ENCODE measurements at regions of chr3 and their contacts with region 1.

Region 1: DNA sequence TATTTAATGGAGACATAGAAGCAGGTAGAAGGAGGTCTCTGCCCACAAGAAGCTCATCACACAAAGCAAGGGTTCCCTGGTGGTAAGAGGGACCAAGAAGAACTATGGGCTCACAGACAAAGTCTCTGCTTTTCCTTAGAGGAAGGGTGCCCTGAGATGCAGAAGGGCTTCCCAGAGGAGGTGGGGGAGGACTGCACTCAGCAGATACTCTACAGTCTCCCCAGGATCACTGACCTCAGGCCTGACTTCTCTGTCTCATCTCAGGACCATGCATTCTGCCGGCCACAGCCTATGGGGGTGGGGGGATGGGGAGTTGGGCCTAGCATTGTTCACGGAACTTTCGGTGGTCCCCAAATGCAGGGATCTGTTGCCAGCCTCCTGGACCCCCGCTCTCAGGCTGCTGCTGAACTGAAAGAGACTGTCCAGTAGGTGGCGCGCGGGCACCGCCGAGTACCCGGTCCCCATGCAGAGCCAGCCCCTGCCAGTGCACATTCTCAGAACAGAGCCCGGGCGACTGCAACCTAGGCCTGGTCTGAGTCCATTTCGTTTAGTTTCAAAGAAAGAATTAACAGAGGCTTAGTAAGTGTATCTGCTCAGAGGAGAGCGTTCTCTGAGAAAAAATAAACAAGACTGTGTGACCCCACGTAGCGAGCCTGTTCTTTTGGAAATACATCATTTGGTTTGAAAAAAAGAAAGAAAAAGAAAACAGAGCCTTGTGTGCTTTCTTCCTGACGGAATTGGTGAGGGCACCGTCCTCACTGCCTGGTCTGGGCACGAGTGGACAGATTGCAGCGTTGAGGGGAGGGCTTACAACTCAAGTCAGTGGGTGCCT is 74.1 kb downstream of the LRTM1 start:
- DNase-seq: peak; percentile 72 to 79
- ATAC-seq: peak; percentile 78 to 92 (median 90)
- H3K4me3 ChIP-seq: no peak overlapping the region
- H3K27ac ChIP-seq: no peak overlapping the region
- H3K4me1 ChIP-seq: peaks cover 0 to 4% (median 0%) of the 10 kb centered on the region in 9 donors
- H3K27me3 ChIP-seq: no peaks in the 10 kb centered on the region
- CTCF ChIP-seq: peak; percentile 67 to 89 (median 87)

Region 2: GRCh38 chr3:54756330-54756731 is 97.5 kb before region 1 on chr3:
- intact Hi-C with region 1: no loop called
- DNase-seq: no peak
- ATAC-seq: no peak
- H3K4me3 ChIP-seq: no peak overlapping the region
- H3K27ac ChIP-seq: no peak overlapping the region
- H3K4me1 ChIP-seq: no peaks in the 10 kb centered on the region
- H3K27me3 ChIP-seq: no peaks in the 10 kb centered on the region
- CTCF ChIP-seq: no peak

Region 3: GRCh38 chr3:54875596-54876268 is 21.9 kb after region 1 on chr3:
- intact Hi-C with region 1: loop called in 1 of 10 experiments (anchors 1 kb)
- DNase-seq: no peak
- ATAC-seq: no peak
- H3K4me3 ChIP-seq: no peak overlapping the region
- H3K27ac ChIP-seq: no peak overlapping the region
- H3K4me1 ChIP-seq: no peaks in the 10 kb centered on the region
- H3K27me3 ChIP-seq: peaks cover 0 to 9% (median 0%) of the 10 kb centered on the region in 7 donors
- CTCF ChIP-seq: no peak

Region 4: GRCh38 chr3:55144015-55144673 is 290.4 kb after region 1 on chr3:
- intact Hi-C with region 1: no loop called
- DNase-seq: no peak
- ATAC-seq: no peak
- H3K4me3 ChIP-seq: no peak overlapping the region
- H3K27ac ChIP-seq: no peak overlapping the region
- H3K4me1 ChIP-seq: peaks cover 0 to 7% (median 0%) of the 10 kb centered on the region in 9 donors
- H3K27me3 ChIP-seq: peaks cover 0 to 29% (median 0%) of the 10 kb centered on the region in 7 donors
- CTCF ChIP-seq: no peak

Region 5: DNA sequence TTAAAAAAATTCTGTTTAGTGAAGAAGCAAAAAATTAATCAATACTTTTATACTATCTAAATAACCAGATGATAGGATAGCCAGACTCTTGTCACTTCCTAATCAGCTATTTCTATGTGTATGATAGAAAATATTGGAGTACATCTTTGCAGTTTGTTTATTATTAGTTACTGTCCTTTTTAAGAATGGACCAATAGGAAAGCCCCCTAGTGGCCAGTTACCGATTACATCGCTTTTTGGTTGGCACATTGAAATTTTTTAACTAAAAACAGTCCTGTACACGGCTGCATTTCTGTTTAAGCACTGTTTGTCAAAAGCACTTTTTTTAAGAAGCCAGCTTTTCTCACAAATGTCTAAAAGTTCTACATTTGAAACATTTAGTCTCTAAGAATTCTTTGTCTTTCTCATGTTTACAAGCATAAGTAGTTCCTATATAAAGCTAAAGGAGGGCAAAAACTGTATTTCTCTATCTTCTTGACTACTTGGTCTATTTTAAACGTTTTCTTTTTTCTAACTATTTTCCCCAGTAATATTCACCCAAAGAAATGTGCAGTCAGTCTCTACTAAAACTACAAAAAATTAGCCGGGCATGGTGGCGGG is 327.2 kb after region 1 on chr3:
- intact Hi-C with region 1: loop called in 7 of 10 experiments (anchors 2 to 10 kb)
- DNase-seq: peak in 1 of 2 donors; percentile 36
- ATAC-seq: no peak
- H3K4me3 ChIP-seq: no peak overlapping the region
- H3K27ac ChIP-seq: no peak overlapping the region
- H3K4me1 ChIP-seq: no peaks in the 10 kb centered on the region
- H3K27me3 ChIP-seq: peaks cover 0 to 18% (median 11%) of the 10 kb centered on the region in 7 donors
- CTCF ChIP-seq: peak; percentile 57 to 83 (median 70)

Region 6: GRCh38 chr3:56042326-56042951 is 1188.7 kb after region 1 on chr3:
- intact Hi-C with region 1: loop called in 1 of 10 experiments (anchors 5 kb)
- DNase-seq: no peak
- ATAC-seq: peak in 6 of 8 donors; percentile 57 to 82 (median 64)
- H3K4me3 ChIP-seq: no peak overlapping the region
- H3K27ac ChIP-seq: no peak overlapping the region
- H3K4me1 ChIP-seq: no peaks in the 10 kb centered on the region
- H3K27me3 ChIP-seq: peaks cover 0 to 45% (median 11%) of the 10 kb centered on the region in 7 donors
- CTCF ChIP-seq: peak in 8 of 9 donors; percentile 33 to 66 (median 54)

Region 7: GRCh38 chr3:56251343-56251945 is 1397.7 kb after region 1 on chr3:
- intact Hi-C with region 1: loop called in 5 of 10 experiments (anchors 5 to 10 kb)
- DNase-seq: peak in 1 of 2 donors; percentile 32
- ATAC-seq: peak in 1 of 8 donors; percentile 39
- H3K4me3 ChIP-seq: no peak overlapping the region
- H3K27ac ChIP-seq: no peak overlapping the region
- H3K4me1 ChIP-seq: no peaks in the 10 kb centered on the region
- H3K27me3 ChIP-seq: peaks cover 0 to 4% (median 0%) of the 10 kb centered on the region in 7 donors
- CTCF ChIP-seq: peak; percentile 55 to 82 (median 77)

Measured in heart right ventricle (tissue), 16 donors.